ENCODE measurements at regions of chr12 and their contacts with region 1.

Region 1: GRCh38 chr12:104215638-104216297 is at the start of gene TXNRD1:
- DNase-seq: peak; percentile 89
- ATAC-seq: peak; percentile 88 to 94
- total RNA-seq, gene TXNRD1: 114 to 122 TPM

Region 2: GRCh38 chr12:103833891-103834290 is 381.9 kb before region 1 on chr12:
- intact Hi-C with region 1: no loop called
- DNase-seq: no peak
- ATAC-seq: no peak

Region 3: DNA sequence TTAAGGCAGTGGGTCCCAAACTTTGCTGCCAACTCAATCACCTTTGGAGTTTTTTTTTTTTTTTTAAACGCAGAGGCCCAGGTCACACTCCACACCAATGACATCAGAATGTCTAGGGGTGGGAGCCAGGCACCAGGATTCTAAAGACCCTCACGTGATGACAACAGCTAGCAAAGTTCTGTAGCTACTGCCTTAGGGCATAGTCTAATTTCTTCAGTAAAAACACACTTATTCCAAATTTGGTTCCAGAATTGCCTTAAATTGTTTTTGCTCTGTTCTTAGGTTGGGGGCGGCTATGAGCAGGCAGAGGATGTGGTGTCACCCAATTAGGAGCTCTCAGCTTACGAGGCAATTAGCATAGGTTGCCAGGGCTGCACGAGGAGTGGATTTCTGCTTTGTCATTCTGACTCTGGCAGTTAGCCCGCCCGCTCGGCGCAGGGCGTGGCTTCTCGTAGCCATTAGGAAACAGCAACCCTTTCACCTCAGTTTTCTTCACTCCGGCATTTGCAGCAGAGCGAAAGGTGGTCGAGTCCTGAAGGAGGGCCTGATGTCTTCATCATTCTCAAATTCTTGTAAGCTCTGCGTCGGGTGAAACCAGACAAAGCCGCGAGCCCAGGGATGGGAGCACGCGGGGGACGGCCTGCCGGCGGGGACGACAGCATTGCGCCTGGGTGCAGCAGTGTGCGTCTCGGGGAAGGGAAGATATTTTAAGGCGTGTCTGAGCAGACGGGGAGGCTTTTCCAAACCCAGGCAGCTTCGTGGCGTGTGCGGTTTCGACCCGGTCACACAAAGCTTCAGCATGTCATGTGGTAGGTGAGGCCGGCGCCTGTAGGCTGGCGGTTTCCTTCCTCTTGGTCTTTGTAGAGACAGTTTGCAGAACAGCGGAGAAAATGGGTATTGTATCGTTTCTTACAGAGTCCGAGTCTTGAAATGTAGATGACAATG is 71.0 kb after region 1 on chr12:
- intact Hi-C with region 1: loop called in 1 of 2 experiments (anchors 2 kb)
- DNase-seq: peak; percentile 93
- ATAC-seq: peak; percentile 93 to 95

Region 4: DNA sequence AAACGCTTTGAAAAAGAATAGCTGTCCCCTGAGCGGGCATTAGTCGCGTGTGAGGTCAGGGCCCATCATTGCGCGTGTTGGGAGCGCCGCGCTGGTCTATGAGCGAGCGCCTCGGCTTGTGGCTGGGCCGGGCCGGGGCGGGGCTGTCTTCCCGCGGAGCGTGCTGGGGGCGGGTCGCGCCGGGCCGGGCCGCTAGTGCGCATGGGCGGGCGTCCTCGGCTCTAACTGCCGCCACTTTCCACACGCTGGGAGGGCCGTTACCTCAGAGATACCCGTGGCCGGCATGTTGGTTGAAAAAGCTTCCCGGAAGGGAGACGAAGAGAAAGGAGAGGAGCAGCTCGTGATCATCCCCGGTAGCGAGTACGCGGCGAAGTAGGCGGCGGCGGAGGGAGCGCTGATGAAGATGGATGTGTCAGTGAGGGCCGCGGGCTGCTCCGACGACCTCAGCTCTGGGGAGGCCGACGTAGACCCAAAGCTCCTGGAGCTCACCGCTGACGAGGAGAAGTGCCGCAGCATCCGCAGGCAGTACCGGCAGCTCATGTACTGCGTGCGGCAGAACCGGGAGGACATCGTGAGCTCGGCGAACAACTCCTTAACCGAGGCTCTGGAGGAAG is 87.9 kb after region 1 on chr12 and contains the start of gene EID3:
- intact Hi-C with region 1: loop called in 1 of 2 experiments (anchors 10 kb)
- DNase-seq: peak; percentile 93
- ATAC-seq: peak; percentile 99 to 100
- total RNA-seq, gene EID3: 1.6 to 1.7 TPM

Region 5: GRCh38 chr12:104358347-104359003 is 142.7 kb after region 1 on chr12:
- intact Hi-C with region 1: loop called in 1 of 2 experiments (anchors 5 kb)
- DNase-seq: peak; percentile 53
- ATAC-seq: peak; percentile 62 to 66